HepG2 (cell line): ENCODE measurements at regions of chr1 and their contacts with region 1.

Region 1: DNA sequence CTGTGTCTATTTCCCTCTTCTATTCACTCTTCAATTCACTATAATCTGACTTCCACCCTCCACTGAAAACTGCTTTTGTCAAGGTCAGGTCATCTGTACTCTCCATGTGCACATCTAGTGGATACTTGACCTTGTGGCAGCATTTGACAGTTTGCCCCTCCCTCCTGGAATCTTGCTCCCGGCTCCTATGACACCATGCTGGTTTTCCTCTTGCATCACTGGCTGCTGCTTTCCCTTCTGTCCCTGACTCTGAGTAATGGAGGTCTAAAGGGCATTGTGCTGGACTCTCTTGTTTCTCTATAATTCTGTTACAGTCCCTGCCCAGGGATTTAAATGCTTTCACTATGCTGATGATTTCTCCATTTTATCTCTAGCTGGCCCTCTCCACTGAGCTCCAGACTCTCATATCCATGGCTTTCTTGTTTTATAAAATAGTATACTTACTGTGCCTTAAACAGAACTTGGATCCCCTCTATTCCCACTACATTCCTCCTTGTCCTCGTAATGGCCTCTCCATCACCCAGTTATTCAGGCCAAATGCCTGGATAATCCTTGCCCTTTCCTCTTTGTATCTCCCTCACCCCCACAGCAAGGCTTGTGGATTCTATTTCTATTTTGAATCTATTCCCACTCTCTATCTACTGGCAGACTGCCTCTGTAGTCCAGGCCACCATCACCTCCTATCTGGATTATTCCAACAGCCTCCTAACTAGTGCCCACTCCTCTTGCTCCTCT is 36.8 kb upstream of the PODN start:
- DNase-seq: peak; percentile 90
- ATAC-seq: peak; percentile 99
- H3K4me3 ChIP-seq: no peak overlapping the region; a peak in 1 of 6 replicates
- H3K27ac ChIP-seq: peak overlapping the region; percentile 62
- H3K4me1 ChIP-seq: peaks cover 22% of the 10 kb centered on the region
- H3K27me3 ChIP-seq: no peaks in the 10 kb centered on the region
- CTCF ChIP-seq: no peak
- EP300 ChIP-seq: peak in 1 of 2 experiments; percentile 68; a peak in 2 of 4 replicates
- POLR2A ChIP-seq: no peak
- RAD21 ChIP-seq: no peak

Region 2: DNA sequence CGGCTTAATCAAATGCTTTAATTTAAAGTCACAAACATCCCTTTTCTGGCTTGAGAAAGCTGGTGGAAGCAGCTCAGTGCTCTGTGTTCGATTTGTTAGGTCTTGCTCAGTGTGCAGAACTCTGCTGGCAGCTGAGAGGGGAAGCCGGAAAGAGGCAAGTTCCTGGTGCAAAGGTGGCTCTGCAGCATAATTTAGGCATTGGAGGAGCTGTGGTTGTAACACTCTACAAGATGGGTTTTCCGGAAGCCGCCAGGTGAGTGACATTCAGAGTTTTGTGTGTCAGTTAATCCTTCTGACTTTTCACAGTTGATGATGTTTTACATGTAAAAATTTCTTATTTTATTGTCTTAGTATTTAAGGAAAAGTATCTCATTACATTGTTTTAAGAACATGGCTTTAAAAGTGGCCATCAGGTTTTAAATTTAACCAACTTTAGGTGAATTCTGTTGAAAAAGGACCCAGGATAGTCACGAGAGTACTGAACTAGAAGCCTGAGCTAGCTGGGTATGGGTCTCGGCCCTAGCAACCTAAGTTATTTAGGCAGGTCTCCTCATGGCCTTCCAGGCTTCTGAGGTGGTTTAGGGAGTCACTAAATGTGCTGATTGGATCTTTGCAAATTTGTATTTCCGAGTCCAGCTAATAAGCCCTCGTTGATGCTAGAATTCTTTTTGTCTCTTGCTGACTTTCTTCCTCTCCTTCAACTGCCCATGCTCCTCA is 10.3 kb before region 1 on chr1:
- CTCF ChIA-PET with region 1: no interaction called
- POLR2A ChIA-PET with region 1: no interaction called
- in situ Hi-C with region 1: no loop called
- intact Hi-C with region 1: loop called (anchors 1 kb)
- DNase-seq: peak; percentile 90
- ATAC-seq: peak; percentile 99
- H3K4me3 ChIP-seq: peak overlapping the region; percentile 59 to 92 (median 76)
- H3K27ac ChIP-seq: peak overlapping the region; percentile 73
- H3K4me1 ChIP-seq: peaks cover 21% of the 10 kb centered on the region
- H3K27me3 ChIP-seq: no peaks in the 10 kb centered on the region; a peak in 1 of 5 replicates
- CTCF ChIP-seq: no peak
- EP300 ChIP-seq: peak in 1 of 2 experiments; percentile 49; a peak in 1 of 4 replicates
- POLR2A ChIP-seq: peak; percentile 52 to 54
- RAD21 ChIP-seq: no peak; the same call in 1 of the 2 replicates